Endothelial cell of umbilical vein (primary cell): ENCODE measurements at regions of chrX and their contacts with region 1.

Region 1: DNA sequence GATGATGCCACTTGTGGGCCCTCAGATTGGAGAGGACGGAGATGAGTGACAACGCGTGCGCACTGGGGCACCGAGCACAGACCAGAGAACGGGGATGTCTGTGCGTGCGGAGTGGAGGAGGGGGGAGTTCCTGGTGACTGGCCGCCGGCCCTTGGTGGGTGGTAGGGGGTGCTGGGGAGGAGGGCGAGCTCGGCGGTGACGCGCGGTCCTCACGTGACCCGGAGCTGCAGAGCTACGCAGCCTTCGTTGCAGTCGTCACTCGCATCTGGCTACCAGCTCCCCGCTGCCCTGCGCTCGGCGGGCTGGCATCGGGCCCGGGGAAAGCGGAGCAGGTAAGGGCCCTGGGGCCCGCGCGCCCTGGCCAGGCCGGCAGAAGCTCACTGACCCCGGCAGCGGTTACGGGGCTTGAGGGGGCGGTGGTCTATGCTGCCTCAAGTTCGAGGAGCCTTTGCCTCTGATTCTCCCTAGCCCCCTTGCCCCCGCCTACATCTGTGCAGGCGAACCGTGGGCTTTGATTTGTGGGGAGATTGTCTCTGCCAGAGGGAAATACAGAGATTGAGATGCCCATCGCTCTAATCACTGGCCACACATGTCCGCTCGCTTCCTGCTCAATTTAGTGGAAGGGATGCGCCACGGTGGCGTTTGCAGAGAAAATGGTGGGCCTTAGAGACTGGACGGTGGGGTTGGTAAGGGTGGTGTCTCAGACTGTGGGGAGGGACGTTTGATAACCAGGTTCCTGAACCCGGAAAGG is at the start of gene ARMCX4:
- DNase-seq: peak; percentile 75
- H3K4me3 ChIP-seq: peak within 1 kb of the TSS; percentile 5 to 74 (median 72)
- H3K27ac ChIP-seq: peak within 1 kb of the TSS; percentile 57
- H3K4me1 ChIP-seq: no peaks in the 10 kb centered on the region
- H3K27me3 ChIP-seq: no peaks in the 10 kb centered on the region
- CTCF ChIP-seq: no peak
- POLR2A ChIP-seq: peak; percentile 58
- total RNA-seq, gene ARMCX4: 17.6 and 19.9 TPM in 2 replicates

Region 2: GRCh38 chrX:101229170-101229569 is 256.2 kb before region 1 on chrX:
- CTCF ChIA-PET with region 1: no interaction called
- POLR2A ChIA-PET with region 1: no interaction called
- dilution Hi-C with region 1: no loop called
- intact Hi-C with region 1: no loop called
- DNase-seq: no peak
- H3K4me3 ChIP-seq: no peak overlapping the region
- H3K27ac ChIP-seq: no peak overlapping the region
- H3K4me1 ChIP-seq: peaks cover 6% of the 10 kb centered on the region
- H3K27me3 ChIP-seq: no peaks in the 10 kb centered on the region
- CTCF ChIP-seq: no peak
- POLR2A ChIP-seq: no peak

Region 3: DNA sequence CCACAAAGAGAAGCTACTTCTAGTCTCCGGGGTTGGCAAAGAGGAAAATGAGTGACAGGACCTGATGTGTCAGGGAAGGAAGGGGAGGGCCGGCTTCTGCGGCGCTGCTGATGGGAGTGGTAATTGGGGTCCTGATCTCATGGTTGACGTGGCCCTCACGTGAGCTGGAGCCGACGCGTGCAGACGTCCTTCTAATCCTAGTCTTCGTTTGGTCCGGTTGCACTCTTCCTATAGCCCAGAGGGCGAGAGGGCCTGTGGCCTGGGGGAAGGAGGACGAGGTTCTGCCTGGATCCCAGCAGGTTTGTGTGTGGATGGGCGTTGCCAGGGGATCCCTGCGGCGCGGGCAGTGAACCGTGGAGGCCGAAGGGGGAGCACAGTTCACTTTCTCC is 65.0 kb after region 1 on chrX and contains the start of gene ARMCX1:
- CTCF ChIA-PET with region 1: no interaction called
- POLR2A ChIA-PET with region 1: interaction called, 4 read pairs
- dilution Hi-C with region 1: no loop called
- intact Hi-C with region 1: loop called (anchors 2 kb)
- DNase-seq: peak; percentile 87
- H3K4me3 ChIP-seq: peak within 1 kb of the TSS; percentile 58 to 88 (median 87)
- H3K27ac ChIP-seq: peak within 1 kb of the TSS; percentile 86
- H3K4me1 ChIP-seq: peaks cover 2% of the 10 kb centered on the region
- H3K27me3 ChIP-seq: no peaks in the 10 kb centered on the region
- CTCF ChIP-seq: no peak
- POLR2A ChIP-seq: peak; percentile 91
- total RNA-seq, gene ARMCX1: 19.9 and 22.4 TPM in 2 replicates